ENCODE measurements at regions of chr4 and their contacts with region 1.

Region 1: GRCh38 chr4:66640233-66640990 is 904.9 kb downstream of the CENPC start:
- DNase-seq: no peak
- ATAC-seq: no peak
- H3K4me3 ChIP-seq: no peak overlapping the region
- H3K27ac ChIP-seq: no peak overlapping the region
- H3K4me1 ChIP-seq: no peaks in the 10 kb centered on the region
- H3K27me3 ChIP-seq: no peaks in the 10 kb centered on the region
- CTCF ChIP-seq: no peak
- POLR2A ChIP-seq: no peak

Region 2: GRCh38 chr4:66704243-66704642 is 63.8 kb after region 1 on chr4:
- in situ Hi-C with region 1: loop called in 1 of 4 experiments (anchors 10 kb)
- intact Hi-C with region 1: no loop called
- DNase-seq: no peak
- ATAC-seq: no peak
- H3K4me3 ChIP-seq: no peak overlapping the region
- H3K27ac ChIP-seq: no peak overlapping the region
- H3K4me1 ChIP-seq: no peaks in the 10 kb centered on the region
- H3K27me3 ChIP-seq: no peaks in the 10 kb centered on the region
- CTCF ChIP-seq: no peak
- POLR2A ChIP-seq: no peak